PC-9 (cell line): ENCODE measurements at regions of chrX and their contacts with region 1.

Region 1: GRCh38 chrX:68828740-68829552 is at the start of gene EFNB1:
- DNase-seq: peak; percentile 89 to 93
- H3K4me3 ChIP-seq: peak within 1 kb of the TSS; percentile 86
- H3K27ac ChIP-seq: no peak within 1 kb of the TSS
- H3K4me1 ChIP-seq: peaks cover 13% of the 10 kb centered on the region
- H3K27me3 ChIP-seq: no peaks in the 10 kb centered on the region
- CTCF ChIP-seq: no peak
- total RNA-seq, gene EFNB1: 31.1 and 35.2 TPM in 2 replicates

Region 2: GRCh38 chrX:68732906-68733493 is 95.9 kb before region 1 on chrX:
- CTCF ChIA-PET with region 1: no interaction called
- POLR2A ChIA-PET with region 1: no interaction called
- intact Hi-C with region 1: loop called (anchors 5 kb)
- DNase-seq: peak in 1 of 2 experiments; percentile 54
- H3K4me3 ChIP-seq: no peak overlapping the region
- H3K27ac ChIP-seq: no peak overlapping the region
- H3K4me1 ChIP-seq: no peaks in the 10 kb centered on the region
- H3K27me3 ChIP-seq: peaks cover 11% of the 10 kb centered on the region
- CTCF ChIP-seq: peak; percentile 66

Region 3: GRCh38 chrX:68929332-68930150 is 100.6 kb after region 1 on chrX:
- CTCF ChIA-PET with region 1: no interaction called
- POLR2A ChIA-PET with region 1: interaction called, 9 read pairs
- intact Hi-C with region 1: loop called (anchors 2 kb)
- DNase-seq: peak; percentile 64 to 77
- H3K4me3 ChIP-seq: no peak overlapping the region
- H3K27ac ChIP-seq: no peak overlapping the region
- H3K4me1 ChIP-seq: peaks cover 26% of the 10 kb centered on the region
- H3K27me3 ChIP-seq: no peaks in the 10 kb centered on the region
- CTCF ChIP-seq: no peak

Region 4: GRCh38 chrX:68982476-68982875 is 153.5 kb after region 1 on chrX:
- CTCF ChIA-PET with region 1: interaction called, 3 read pairs
- POLR2A ChIA-PET with region 1: interaction called, 16 read pairs
- intact Hi-C with region 1: no loop called
- DNase-seq: no peak
- H3K4me3 ChIP-seq: no peak overlapping the region
- H3K27ac ChIP-seq: no peak overlapping the region
- H3K4me1 ChIP-seq: 0 out of 2 replicates have a peak, but pooled peaks cover 6% of the 10 kb centered on the region
- H3K27me3 ChIP-seq: no peaks in the 10 kb centered on the region
- CTCF ChIP-seq: no peak

Region 5: GRCh38 chrX:69031221-69031620 is 202.3 kb after region 1 on chrX:
- CTCF ChIA-PET with region 1: interaction called, 6 read pairs
- POLR2A ChIA-PET with region 1: interaction called, 3 read pairs
- intact Hi-C with region 1: loop called (anchors 1 kb)
- DNase-seq: no peak
- H3K4me3 ChIP-seq: no peak overlapping the region
- H3K27ac ChIP-seq: peak overlapping the region; percentile 79
- H3K4me1 ChIP-seq: peaks cover 34% of the 10 kb centered on the region
- H3K27me3 ChIP-seq: no peaks in the 10 kb centered on the region
- CTCF ChIP-seq: no peak

Region 6: DNA sequence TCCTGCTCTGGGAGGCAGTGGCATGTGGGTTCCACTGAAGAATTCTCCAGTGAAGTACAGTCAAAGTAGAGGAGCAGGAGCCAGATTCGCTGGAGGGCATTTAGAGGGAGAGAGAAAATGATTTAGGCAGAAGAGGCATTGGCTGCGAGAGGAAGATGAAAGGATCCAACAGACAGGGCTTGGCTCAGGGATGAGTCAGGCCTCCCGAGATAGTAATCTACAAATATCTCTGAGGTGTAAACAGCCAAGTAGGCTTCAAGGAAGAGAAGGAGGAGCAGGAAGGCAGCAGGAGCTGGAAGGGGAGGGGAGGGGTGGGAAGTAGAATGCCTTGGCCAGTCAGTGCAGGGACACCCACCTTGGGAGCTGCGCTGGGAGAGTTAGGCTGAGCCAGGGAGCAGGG is 280.7 kb after region 1 on chrX:
- CTCF ChIA-PET with region 1: interaction called, 4 read pairs
- POLR2A ChIA-PET with region 1: interaction called, 8 read pairs
- intact Hi-C with region 1: loop called (anchors 5 kb)
- DNase-seq: peak; percentile 73 to 93
- H3K4me3 ChIP-seq: no peak overlapping the region
- H3K27ac ChIP-seq: no peak overlapping the region
- H3K4me1 ChIP-seq: peaks cover 36% of the 10 kb centered on the region
- H3K27me3 ChIP-seq: no peaks in the 10 kb centered on the region
- CTCF ChIP-seq: no peak

Region 7: GRCh38 chrX:69222103-69223090 is 393.5 kb after region 1 on chrX:
- CTCF ChIA-PET with region 1: interaction called, 7 read pairs
- POLR2A ChIA-PET with region 1: interaction called, 3 read pairs
- intact Hi-C with region 1: loop called (anchors 1 kb)
- DNase-seq: peak; percentile 43 to 77
- H3K4me3 ChIP-seq: no peak overlapping the region
- H3K27ac ChIP-seq: no peak overlapping the region
- H3K4me1 ChIP-seq: no peaks in the 10 kb centered on the region
- H3K27me3 ChIP-seq: no peaks in the 10 kb centered on the region
- CTCF ChIP-seq: peak; percentile 85